ENCODE measurements at regions of chr15 and their contacts with region 1.

Region 1: GRCh38 chr15:89912674-89913396 is at the start of gene ARPIN:
- ATAC-seq: peak; percentile 84 to 92 (median 86)
- H3K4me3 ChIP-seq: peak within 1 kb of the TSS; percentile 44 to 79 (median 65)
- H3K27ac ChIP-seq: peak within 1 kb of the TSS; percentile 27 to 58
- H3K4me1 ChIP-seq: peaks cover 9% of the 10 kb centered on the region in 2 donors
- total RNA-seq, gene ARPIN: 2.5 to 15.3 (median 8.5) TPM

Region 2: DNA sequence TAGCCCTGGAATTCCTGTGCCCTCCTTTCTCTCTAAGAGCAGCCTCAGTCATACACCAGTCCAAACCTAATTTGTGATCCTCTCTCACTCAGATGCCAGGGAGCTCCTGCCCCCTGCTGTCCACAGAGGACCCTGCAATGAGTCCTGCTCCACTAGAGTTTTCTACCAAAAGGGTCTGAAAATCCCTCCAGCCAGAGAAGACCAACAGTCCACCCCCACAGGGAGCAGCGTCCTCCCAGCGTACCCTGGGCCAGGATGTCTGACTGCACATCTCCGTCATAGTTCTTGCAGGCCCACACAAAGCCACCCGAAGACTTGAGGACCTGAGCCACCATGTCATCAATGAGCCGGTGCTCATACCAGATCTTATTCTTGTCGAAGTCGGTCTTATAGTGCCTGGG is 174.0 kb after region 1 on chr15:
- in situ Hi-C with region 1: loop called in 1 of 9 experiments (anchors 25 kb)
- ATAC-seq: peak in 7 of 8 experiments; percentile 28 to 79 (median 58)
- H3K4me3 ChIP-seq: no peak overlapping the region
- H3K27ac ChIP-seq: no peak overlapping the region
- H3K4me1 ChIP-seq: no peaks in the 10 kb centered on the region